PC-9 (cell line): ENCODE measurements at regions of chr2 and their contacts with region 1.

Region 1: GRCh38 chr2:190302052-190302451 is 17.6 kb downstream of the HIBCH start:
- DNase-seq: no peak
- H3K4me3 ChIP-seq: no peak overlapping the region
- H3K27ac ChIP-seq: no peak overlapping the region
- H3K4me1 ChIP-seq: no peaks in the 10 kb centered on the region
- H3K27me3 ChIP-seq: no peaks in the 10 kb centered on the region
- CTCF ChIP-seq: no peak

Region 2: GRCh38 chr2:190551928-190552327 is 249.9 kb after region 1 on chr2:
- CTCF ChIA-PET with region 1: no interaction called
- POLR2A ChIA-PET with region 1: interaction called, 11 read pairs
- intact Hi-C with region 1: no loop called
- DNase-seq: no peak
- H3K4me3 ChIP-seq: no peak overlapping the region
- H3K27ac ChIP-seq: no peak overlapping the region
- H3K4me1 ChIP-seq: no peaks in the 10 kb centered on the region
- H3K27me3 ChIP-seq: no peaks in the 10 kb centered on the region
- CTCF ChIP-seq: no peak